WTC11 (cell line): ENCODE measurements at regions of chr11 and their contacts with region 1.

Region 1: DNA sequence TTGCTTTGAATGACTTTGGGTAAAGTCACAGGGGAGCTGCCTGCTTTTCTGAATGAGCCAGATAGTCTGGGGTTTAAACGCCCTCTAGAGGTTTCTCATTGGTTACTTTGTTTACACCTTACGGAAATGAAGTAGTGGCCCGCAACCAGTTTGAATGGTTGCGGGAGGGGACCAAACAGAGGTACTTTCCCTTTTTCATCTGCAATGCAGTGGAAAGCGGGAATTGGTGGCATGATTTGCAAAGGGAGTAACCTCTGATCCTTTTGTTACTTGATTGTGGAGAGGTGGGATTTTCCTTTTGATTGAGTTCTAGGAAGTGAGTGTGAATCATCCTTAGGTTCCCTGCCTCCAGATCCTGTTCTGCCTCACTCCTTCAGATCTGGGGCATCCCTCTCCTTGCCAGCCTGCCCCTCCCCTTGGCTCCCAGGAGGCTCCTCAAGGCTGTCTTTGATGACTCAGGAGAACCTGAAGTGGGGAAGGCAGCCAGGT is 15.9 kb upstream of the GLYATL1 start:
- DNase-seq: peak; percentile 43
- ATAC-seq: peak; percentile 56
- H3K4me3 Mint-ChIP-seq: peak overlapping the region; percentile 63
- H3K27ac Mint-ChIP-seq: peak overlapping the region; percentile 94
- H3K4me1 Mint-ChIP-seq: peaks cover 48% of the 10 kb centered on the region
- H3K27me3 Mint-ChIP-seq: peaks cover under 1% of the 10 kb centered on the region; the same call in 1 of the 2 replicates
- CTCF ChIP-seq: no peak

Region 2: DNA sequence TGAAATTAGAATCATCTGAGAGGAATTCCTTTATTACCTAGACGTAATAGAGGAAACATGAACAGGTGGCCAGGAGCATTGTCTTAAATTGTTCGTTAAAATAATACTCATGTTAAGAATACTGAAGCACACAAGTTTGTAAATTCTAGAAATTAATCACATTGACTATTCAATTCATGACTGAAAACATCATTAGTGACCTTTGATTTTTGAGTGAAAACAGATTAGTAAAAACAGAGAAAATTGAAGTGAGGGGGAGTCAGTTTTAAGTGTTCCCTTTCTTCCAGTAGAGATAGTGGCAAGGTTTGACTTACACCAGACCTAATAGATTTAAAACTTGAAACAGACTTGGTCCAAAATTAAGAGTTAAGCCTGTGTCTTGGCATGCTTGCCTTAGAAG is 343.0 kb before region 1 on chr11:
- CTCF ChIA-PET with region 1: no interaction called
- POLR2A ChIA-PET with region 1: no interaction called
- DNase-seq: no peak
- ATAC-seq: no peak
- H3K4me3 Mint-ChIP-seq: peak overlapping the region; percentile 96
- H3K27ac Mint-ChIP-seq: peak overlapping the region; percentile 98; the same call in 1 of the 2 replicates
- H3K4me1 Mint-ChIP-seq: peaks cover 38% of the 10 kb centered on the region
- H3K27me3 Mint-ChIP-seq: no peaks in the 10 kb centered on the region
- CTCF ChIP-seq: no peak

Region 3: GRCh38 chr11:58905721-58906477 is 17.4 kb before region 1 on chr11:
- CTCF ChIA-PET with region 1: interaction called, 55 read pairs
- POLR2A ChIA-PET with region 1: interaction called, 15 read pairs
- DNase-seq: peak; percentile 85
- ATAC-seq: peak; percentile 80
- H3K4me3 Mint-ChIP-seq: peak overlapping the region; percentile 65
- H3K27ac Mint-ChIP-seq: no peak overlapping the region
- H3K4me1 Mint-ChIP-seq: peaks cover 31% of the 10 kb centered on the region
- H3K27me3 Mint-ChIP-seq: peaks cover 79% of the 10 kb centered on the region
- CTCF ChIP-seq: no peak; the same call in 1 of the 2 replicates

Region 4: GRCh38 chr11:58963528-58964104 is 40.3 kb after region 1 on chr11:
- CTCF ChIA-PET with region 1: interaction called, 33 read pairs
- POLR2A ChIA-PET with region 1: interaction called, 4 read pairs
- DNase-seq: peak; percentile 74
- ATAC-seq: peak; percentile 94
- H3K4me3 Mint-ChIP-seq: peak overlapping the region; percentile 64
- H3K27ac Mint-ChIP-seq: peak overlapping the region; percentile 78; the same call in 1 of the 2 replicates
- H3K4me1 Mint-ChIP-seq: peaks cover 26% of the 10 kb centered on the region
- H3K27me3 Mint-ChIP-seq: peaks cover 65% of the 10 kb centered on the region
- CTCF ChIP-seq: no peak

Region 5: DNA sequence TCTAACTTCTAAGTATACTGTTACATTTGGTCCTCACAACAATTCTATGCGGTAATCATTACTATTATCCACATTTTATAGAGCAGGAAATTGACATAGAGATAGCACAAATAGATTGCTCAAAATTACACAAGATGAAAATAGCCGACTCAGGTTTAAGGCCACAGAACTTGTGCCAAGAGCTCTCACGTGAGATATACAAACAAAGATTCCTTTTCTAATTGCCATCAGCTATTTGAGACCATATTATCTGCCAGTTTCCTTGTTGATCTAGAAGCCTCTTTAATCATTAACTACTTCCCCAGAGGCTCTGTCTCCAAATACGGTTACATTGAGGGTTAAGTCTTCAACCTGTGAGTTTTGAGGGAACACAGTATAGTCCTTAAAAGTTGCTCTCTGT is 101.8 kb after region 1 on chr11:
- CTCF ChIA-PET with region 1: no interaction called
- POLR2A ChIA-PET with region 1: no interaction called
- DNase-seq: no peak
- ATAC-seq: no peak
- H3K4me3 Mint-ChIP-seq: no peak overlapping the region
- H3K27ac Mint-ChIP-seq: no peak overlapping the region
- H3K4me1 Mint-ChIP-seq: peaks cover 15% of the 10 kb centered on the region
- H3K27me3 Mint-ChIP-seq: no peaks in the 10 kb centered on the region
- CTCF ChIP-seq: no peak